Motor neuron (in vitro differentiated cells): ENCODE measurements at regions of chr1 and their contacts with region 1.

Region 1: GRCh38 chr1:118151312-118151937 is 33.6 kb downstream of the SPAG17 start:
- ATAC-seq: peak in 5 of 8 experiments; percentile 22 to 53 (median 36)
- H3K4me3 ChIP-seq: no peak overlapping the region
- H3K27ac ChIP-seq: no peak overlapping the region
- H3K4me1 ChIP-seq: no peaks in the 10 kb centered on the region

Region 2: GRCh38 chr1:117985973-117986372 is 165.5 kb before region 1 on chr1:
- in situ Hi-C with region 1: no loop called
- ATAC-seq: no peak
- H3K4me3 ChIP-seq: no peak overlapping the region
- H3K27ac ChIP-seq: no peak overlapping the region
- H3K4me1 ChIP-seq: no peaks in the 10 kb centered on the region

Region 3: GRCh38 chr1:118716782-118717181 is 565.4 kb after region 1 on chr1:
- in situ Hi-C with region 1: loop called in 1 of 9 experiments (anchors 25 kb)
- ATAC-seq: no peak
- H3K4me3 ChIP-seq: no peak overlapping the region
- H3K27ac ChIP-seq: no peak overlapping the region
- H3K4me1 ChIP-seq: no peaks in the 10 kb centered on the region

Region 4: GRCh38 chr1:118987468-118988185 is 836.2 kb after region 1 on chr1:
- in situ Hi-C with region 1: loop called in 3 of 9 experiments (anchors 25 kb)
- ATAC-seq: peak; percentile 36 to 86 (median 76)
- H3K4me3 ChIP-seq: peak overlapping the region; percentile 2 to 58 (median 35)
- H3K27ac ChIP-seq: peak overlapping the region in 1 of 2 donors; percentile 77
- H3K4me1 ChIP-seq: peaks cover 0 to 32% of the 10 kb centered on the region in 2 donors

Region 5: DNA sequence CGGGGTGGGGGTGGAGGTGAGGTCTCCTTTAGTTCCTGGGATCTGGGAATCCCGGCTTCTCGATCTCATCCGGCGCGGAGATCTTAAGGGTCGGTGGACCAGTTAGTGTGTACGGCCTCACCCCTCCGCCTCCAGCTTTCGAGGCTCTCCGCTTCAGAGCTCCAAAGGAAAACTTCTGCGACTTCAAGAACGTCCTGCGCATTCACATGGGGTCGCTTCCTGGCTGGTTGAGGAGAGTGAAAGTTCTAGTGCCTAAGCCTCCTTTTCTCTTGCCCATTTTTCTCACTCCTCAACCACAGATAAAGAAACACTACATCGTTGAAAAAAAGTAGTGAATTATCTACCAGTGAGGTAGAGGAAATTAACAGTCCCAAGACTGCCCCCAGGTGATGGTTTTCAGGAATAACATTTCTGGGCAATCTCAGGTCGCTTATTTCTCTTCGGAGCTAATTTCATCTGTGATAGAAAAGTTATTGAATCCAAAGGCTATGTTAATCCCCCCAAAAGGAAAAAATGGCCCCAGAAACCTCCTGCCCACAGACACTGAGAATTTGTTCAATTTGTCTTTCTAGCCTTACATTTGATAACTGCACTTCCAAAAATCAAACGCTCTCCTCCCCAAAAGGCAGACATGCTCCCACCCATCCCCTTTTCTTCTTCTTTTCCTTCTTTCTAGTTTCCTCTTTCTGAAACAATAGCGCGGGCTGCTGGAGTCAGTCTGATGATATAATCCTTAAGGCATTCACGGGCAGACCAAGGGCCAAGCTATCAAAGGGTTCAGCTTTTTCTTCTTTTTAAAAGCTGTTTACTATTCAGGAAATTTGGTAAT is 857.3 kb after region 1 on chr1:
- in situ Hi-C with region 1: loop called in 3 of 9 experiments (anchors 10 to 25 kb)
- ATAC-seq: peak; percentile 47 to 77 (median 70)
- H3K4me3 ChIP-seq: peak overlapping the region in 4 of 5 donors; percentile 1 to 23 (median 10)
- H3K27ac ChIP-seq: no peak overlapping the region
- H3K4me1 ChIP-seq: peaks cover 0 to 9% of the 10 kb centered on the region in 2 donors